Activated CD4-positive, alpha-beta T cell treated with anti-CD3 and anti-CD28 coated beads, Interleukin-2, amount 10 ng/mL, durations not matched to agents 24 days and 14 days (primary cell): ENCODE measurements at regions of chr18 and their contacts with region 1.

Region 1: GRCh38 chr18:63040788-63041410 is 278.7 kb downstream of the BCL2 start:
- DNase-seq: peak; percentile 65
- H3K4me3 Mint-ChIP-seq: peak overlapping the region; percentile 57
- H3K27ac Mint-ChIP-seq: peak overlapping the region; percentile 81
- H3K4me1 Mint-ChIP-seq: peaks cover 24% of the 10 kb centered on the region
- H3K27me3 Mint-ChIP-seq: peaks cover 19% of the 10 kb centered on the region

Region 2: GRCh38 chr18:63054901-63055584 is 14.1 kb after region 1 on chr18:
- intact Hi-C with region 1: loop called (anchors 1 kb)
- DNase-seq: no peak
- H3K4me3 Mint-ChIP-seq: no peak overlapping the region
- H3K27ac Mint-ChIP-seq: no peak overlapping the region
- H3K4me1 Mint-ChIP-seq: peaks cover 13% of the 10 kb centered on the region
- H3K27me3 Mint-ChIP-seq: peaks cover 10% of the 10 kb centered on the region

Region 3: DNA sequence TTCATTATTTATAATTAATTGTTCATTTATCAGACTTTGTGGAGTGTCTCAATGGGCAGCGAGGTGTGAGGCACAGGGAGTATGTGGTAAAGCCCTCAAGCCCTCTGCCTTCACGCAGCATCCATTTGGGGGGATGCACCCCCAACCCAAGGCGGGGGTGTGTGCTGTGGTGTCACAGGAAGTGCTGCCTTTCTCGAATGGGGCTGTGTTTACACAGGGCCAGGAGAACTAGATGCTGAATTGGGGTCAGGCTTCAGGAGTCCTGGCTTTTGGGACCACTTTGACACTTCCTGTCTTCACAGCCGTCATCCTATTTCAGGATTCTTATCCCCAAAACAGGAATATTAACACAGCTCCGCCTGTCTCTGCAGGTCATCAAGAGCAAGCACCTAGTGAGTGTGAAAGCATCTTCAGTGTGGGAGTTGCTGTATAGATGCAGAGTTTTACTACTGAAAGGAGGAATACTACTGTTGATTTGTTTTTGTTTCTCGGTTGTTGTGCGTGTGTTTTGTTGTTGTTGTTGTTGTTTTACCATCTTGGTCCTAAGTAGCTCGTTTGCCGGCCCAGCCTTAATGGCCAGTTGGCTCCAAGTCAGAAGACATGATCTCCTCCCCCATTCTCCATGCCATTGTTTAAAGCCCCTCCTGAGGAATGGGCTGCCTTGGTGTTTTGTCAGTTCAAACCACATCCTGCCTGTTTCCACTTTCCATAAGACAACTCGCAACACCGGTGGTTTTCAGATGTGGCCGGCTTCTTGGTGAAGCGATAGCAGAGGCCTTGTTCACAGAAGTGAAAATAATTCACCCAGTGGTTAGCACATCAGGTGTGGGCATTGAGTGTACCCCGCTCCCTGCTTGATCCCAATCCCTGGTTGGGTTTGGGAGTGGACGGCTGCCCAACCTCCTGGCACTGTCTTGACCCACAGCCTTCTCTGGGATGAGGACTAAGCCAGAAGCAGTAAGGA is 57.4 kb after region 1 on chr18:
- intact Hi-C with region 1: loop called (anchors 2 kb)
- DNase-seq: peak; percentile 91
- H3K4me3 Mint-ChIP-seq: peak overlapping the region; percentile 63
- H3K27ac Mint-ChIP-seq: peak overlapping the region; percentile 79
- H3K4me1 Mint-ChIP-seq: peaks cover 53% of the 10 kb centered on the region
- H3K27me3 Mint-ChIP-seq: peaks cover 37% of the 10 kb centered on the region